B cell (primary cell): ENCODE measurements at regions of chr6 and their contacts with region 1.

Region 1: GRCh38 chr6:108359901-108360882 is 65.3 kb downstream of the AFG1L start:
- DNase-seq: peak; percentile 42
- ATAC-seq: peak; percentile 31
- H3K4me3 ChIP-seq: no peak overlapping the region
- H3K4me3 Mint-ChIP-seq: no peak overlapping the region
- H3K27ac ChIP-seq: no peak overlapping the region
- H3K27ac Mint-ChIP-seq: no peak overlapping the region
- H3K4me1 ChIP-seq: no peaks in the 10 kb centered on the region
- H3K4me1 Mint-ChIP-seq: peaks cover 11% of the 10 kb centered on the region
- H3K27me3 ChIP-seq: no peaks in the 10 kb centered on the region
- H3K27me3 Mint-ChIP-seq: no peaks in the 10 kb centered on the region
- CTCF ChIP-seq: peak; percentile 40

Region 2: GRCh38 chr6:108417027-108417426 is 56.8 kb after region 1 on chr6:
- CTCF ChIA-PET with region 1: no interaction called
- POLR2A ChIA-PET with region 1: no interaction called
- intact Hi-C with region 1: loop called (anchors 10 kb)
- DNase-seq: no peak
- ATAC-seq: no peak
- H3K4me3 ChIP-seq: no peak overlapping the region
- H3K4me3 Mint-ChIP-seq: no peak overlapping the region
- H3K27ac ChIP-seq: no peak overlapping the region
- H3K27ac Mint-ChIP-seq: no peak overlapping the region
- H3K4me1 ChIP-seq: no peaks in the 10 kb centered on the region
- H3K4me1 Mint-ChIP-seq: no peaks in the 10 kb centered on the region
- H3K27me3 ChIP-seq: no peaks in the 10 kb centered on the region
- H3K27me3 Mint-ChIP-seq: no peaks in the 10 kb centered on the region
- CTCF ChIP-seq: no peak